ENCODE measurements at regions of chrX and their contacts with region 1.

Region 1: DNA sequence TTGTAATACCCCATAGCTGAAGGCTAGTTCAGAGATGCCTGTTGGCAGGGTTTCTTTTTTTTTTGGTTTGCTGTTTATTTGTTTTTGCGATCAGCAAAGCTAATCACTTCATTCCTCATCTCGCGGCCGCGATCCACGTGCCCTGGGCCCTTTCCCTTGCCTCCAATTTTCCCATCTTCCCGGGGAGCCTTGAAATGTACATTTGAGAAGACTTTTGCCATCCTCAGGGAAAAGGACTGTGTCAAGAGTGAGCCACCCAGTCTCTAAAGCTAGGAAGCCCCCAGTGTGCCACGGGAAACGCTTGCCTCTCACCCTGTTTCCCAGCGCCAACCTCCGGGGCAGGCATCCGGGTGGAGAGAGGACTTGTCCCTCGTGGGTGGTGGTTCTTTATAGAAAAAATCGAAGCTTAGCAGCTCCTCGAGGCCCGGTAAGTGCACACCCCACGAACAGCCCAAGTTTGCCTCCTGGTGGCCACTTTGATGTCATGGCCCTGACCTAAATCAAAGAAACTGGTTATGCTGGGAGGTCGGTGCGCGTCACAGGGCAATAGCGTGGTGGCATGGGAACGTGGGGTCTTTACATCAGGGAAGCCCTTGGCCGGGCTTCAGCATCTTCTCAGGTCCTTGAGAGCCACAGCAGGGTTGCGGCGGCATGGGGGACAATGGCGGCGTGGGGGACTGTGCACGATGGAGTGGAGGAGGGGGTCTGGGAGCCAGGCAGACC is 42.0 kb downstream of the MAP7D3 start:
- DNase-seq: peak in 1 of 2 experiments; percentile 12
- H3K4me3 ChIP-seq: no peak overlapping the region
- H3K4me3 Mint-ChIP-seq: no peak overlapping the region
- H3K27ac Mint-ChIP-seq: no peak overlapping the region
- H3K4me1 ChIP-seq: no peaks in the 10 kb centered on the region
- H3K4me1 Mint-ChIP-seq: no peaks in the 10 kb centered on the region
- H3K27me3 ChIP-seq: no peaks in the 10 kb centered on the region
- H3K27me3 Mint-ChIP-seq: no peaks in the 10 kb centered on the region
- CTCF ChIP-seq: peak in 1 of 2 experiments; percentile 27

Region 2: GRCh38 chrX:136028251-136028984 is 180.8 kb before region 1 on chrX:
- CTCF ChIA-PET with region 1: interaction called, 4 read pairs
- POLR2A ChIA-PET with region 1: no interaction called
- intact Hi-C with region 1: loop called (anchors 1 kb)
- DNase-seq: peak in 1 of 2 experiments; percentile 8
- H3K4me3 ChIP-seq: no peak overlapping the region
- H3K4me3 Mint-ChIP-seq: no peak overlapping the region
- H3K27ac Mint-ChIP-seq: no peak overlapping the region
- H3K4me1 ChIP-seq: no peaks in the 10 kb centered on the region
- H3K4me1 Mint-ChIP-seq: no peaks in the 10 kb centered on the region
- H3K27me3 ChIP-seq: no peaks in the 10 kb centered on the region
- H3K27me3 Mint-ChIP-seq: no peaks in the 10 kb centered on the region
- CTCF ChIP-seq: peak in 1 of 2 experiments; percentile 13

Region 3: GRCh38 chrX:136170134-136170800 is 38.9 kb before region 1 on chrX:
- CTCF ChIA-PET with region 1: interaction called, 5 read pairs
- POLR2A ChIA-PET with region 1: no interaction called
- intact Hi-C with region 1: loop called (anchors 1 kb)
- DNase-seq: peak in 1 of 2 experiments; percentile 12
- H3K4me3 ChIP-seq: no peak overlapping the region
- H3K4me3 Mint-ChIP-seq: no peak overlapping the region
- H3K27ac Mint-ChIP-seq: no peak overlapping the region
- H3K4me1 ChIP-seq: no peaks in the 10 kb centered on the region
- H3K4me1 Mint-ChIP-seq: no peaks in the 10 kb centered on the region
- H3K27me3 ChIP-seq: no peaks in the 10 kb centered on the region
- H3K27me3 Mint-ChIP-seq: peaks cover 10% of the 10 kb centered on the region
- CTCF ChIP-seq: no peak

Region 4: DNA sequence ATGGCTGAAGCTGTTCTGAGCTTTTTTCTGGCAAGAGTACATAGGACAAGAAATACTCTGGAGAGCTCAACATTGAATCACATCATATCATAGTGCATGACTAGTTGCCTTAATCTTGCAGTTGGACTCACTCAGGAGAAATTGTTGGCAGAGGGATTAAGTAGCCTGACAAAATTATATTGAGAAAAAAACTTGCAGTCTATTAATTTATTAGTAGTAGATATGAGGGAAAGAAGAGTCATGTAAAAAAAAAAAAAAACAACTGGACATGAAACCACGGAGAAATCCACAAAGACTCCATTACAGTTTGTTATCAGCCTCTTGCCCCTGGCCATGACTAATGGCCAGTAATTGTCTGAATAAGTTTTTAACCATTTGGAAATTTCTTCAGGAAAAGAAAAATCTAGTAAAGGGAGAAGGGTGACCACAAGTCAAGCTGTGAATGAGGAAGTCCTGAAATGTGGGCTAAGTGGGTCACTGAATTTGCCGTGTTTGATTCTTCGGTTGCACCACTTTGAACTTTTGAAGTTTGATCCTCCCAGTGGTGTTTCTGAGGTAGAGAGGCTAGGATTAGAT is 16.2 kb before region 1 on chrX:
- CTCF ChIA-PET with region 1: no interaction called
- POLR2A ChIA-PET with region 1: no interaction called
- intact Hi-C with region 1: no loop called
- DNase-seq: no peak
- H3K4me3 ChIP-seq: no peak overlapping the region
- H3K4me3 Mint-ChIP-seq: no peak overlapping the region
- H3K27ac Mint-ChIP-seq: no peak overlapping the region
- H3K4me1 ChIP-seq: no peaks in the 10 kb centered on the region
- H3K4me1 Mint-ChIP-seq: no peaks in the 10 kb centered on the region
- H3K27me3 ChIP-seq: no peaks in the 10 kb centered on the region
- H3K27me3 Mint-ChIP-seq: peaks cover 3% of the 10 kb centered on the region
- CTCF ChIP-seq: no peak